Left cardiac atrium (tissue), 4 donors: ENCODE measurements at regions of chr19 and their contacts with region 1.

Region 1: GRCh38 chr19:36986601-36987000 is 70.5 kb downstream of the ZNF568 start:
- DNase-seq: no peak
- ATAC-seq: no peak

Region 2: DNA sequence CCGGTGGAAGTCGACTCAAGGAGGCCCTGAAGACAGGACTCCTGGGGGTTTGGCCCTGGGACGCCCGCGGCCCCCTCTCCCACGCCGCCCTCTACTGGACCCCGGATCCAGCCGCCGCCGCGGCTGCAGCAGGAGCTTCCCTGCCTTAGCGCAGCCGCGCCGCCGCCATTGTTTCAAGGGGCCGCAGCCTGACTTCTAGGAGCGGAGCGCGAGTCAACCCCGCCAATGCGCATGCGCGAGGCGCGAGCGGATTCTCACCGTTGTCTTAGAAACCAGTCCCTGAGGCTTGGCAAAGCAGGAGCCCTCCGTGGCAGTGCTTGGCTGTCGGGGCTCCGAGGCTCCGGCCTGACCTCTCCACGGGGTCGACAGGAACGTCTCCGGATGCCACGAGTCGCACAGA is 72.5 kb after region 1 on chr19:
- intact Hi-C with region 1: loop called in 1 of 2 experiments (anchors 10 kb)
- DNase-seq: peak; percentile 22
- ATAC-seq: no peak